PC-9 (cell line): ENCODE measurements at regions of chr3 and their contacts with region 1.

Region 1: DNA sequence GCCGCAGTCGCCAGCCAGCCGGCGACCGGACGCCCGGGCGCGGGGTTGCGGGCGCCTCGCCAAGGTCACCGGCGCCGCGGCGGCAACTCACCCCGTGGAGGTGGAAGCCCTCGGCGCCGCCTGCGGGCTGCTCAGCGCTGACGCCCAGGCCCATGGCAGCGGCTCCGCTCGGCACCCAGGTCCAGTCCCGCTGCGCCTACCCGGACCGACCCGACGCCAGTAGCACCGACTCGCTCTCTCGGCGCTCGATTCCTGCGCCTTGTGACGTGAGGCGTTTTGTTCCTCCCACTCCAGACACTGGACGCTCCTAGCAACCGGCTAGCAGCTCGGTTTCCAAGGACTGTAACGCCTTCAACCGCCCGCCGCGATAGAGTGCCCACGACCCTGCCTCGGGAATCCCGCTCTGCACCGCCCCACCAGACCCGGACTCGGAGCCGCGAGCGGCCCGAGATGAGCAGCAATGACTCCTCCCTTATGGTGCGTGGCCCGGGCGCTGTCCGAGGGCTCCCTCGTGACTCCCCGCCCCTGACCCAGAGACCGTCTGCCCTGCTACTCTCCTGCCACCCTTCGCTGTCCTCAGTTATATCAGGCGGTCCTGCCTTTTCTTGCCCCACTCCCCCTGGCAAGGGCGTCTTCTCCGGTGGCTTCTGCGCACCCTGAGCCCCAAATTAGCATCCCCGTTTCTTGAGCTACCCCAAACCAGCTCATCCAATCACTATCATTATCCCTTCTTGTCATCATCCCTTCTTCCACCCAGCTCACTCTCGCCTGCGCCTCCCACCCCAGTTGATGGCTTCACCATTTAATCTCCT is at the starts of genes GORASP1 and TTC21A:
- DNase-seq: peak; percentile 64 to 71
- H3K4me3 ChIP-seq: peak within 1 kb of the TSS; percentile 95
- H3K27ac ChIP-seq: no peak within 1 kb of the TSS
- H3K4me1 ChIP-seq: peaks cover 16% of the 10 kb centered on the region
- H3K27me3 ChIP-seq: no peaks in the 10 kb centered on the region
- CTCF ChIP-seq: no peak
- total RNA-seq, gene GORASP1: 43.4 and 44.4 TPM in 2 replicates
- total RNA-seq, gene TTC21A: 9.0 and 9.5 TPM in 2 replicates

Region 2: GRCh38 chr3:39141171-39141995 is 33.8 kb after region 1 on chr3:
- CTCF ChIA-PET with region 1: no interaction called
- POLR2A ChIA-PET with region 1: no interaction called
- intact Hi-C with region 1: loop called (anchors 2 kb)
- DNase-seq: peak; percentile 92 to 97
- H3K4me3 ChIP-seq: no peak overlapping the region; the same call in 1 of the 2 replicates
- H3K27ac ChIP-seq: peak overlapping the region; percentile 77
- H3K4me1 ChIP-seq: peaks cover 52% of the 10 kb centered on the region
- H3K27me3 ChIP-seq: no peaks in the 10 kb centered on the region
- CTCF ChIP-seq: no peak

Region 3: DNA sequence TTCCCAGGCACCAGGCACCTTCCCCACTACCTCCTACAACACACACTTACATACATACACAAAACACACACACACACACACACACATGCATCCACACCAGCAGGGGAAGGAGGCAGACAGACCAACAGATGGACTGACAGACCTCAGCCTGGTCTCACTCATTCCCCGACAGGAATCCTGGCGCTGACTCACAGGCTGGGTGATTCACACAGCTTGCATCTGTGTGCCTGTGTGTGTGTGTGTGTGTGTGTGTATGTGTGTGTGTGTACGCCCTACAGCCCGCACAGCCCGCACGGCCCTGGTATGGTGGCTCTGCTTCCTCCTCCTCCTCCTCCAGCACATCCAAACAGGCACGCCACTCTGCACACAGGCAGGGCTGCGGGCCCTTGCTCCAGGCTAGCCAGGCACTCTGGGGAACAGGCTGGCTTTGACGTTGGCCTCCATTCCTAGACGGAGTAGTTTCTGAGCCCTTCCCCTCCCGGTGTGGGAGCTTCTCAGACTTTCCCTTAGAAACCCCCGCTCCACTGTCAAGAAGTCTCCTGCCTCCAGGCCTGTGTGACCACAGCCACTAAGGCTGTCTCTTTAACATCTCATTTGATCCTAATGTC is 39.5 kb after region 1 on chr3:
- CTCF ChIA-PET with region 1: no interaction called
- POLR2A ChIA-PET with region 1: interaction called, 4 read pairs
- intact Hi-C with region 1: loop called (anchors 1 kb)
- DNase-seq: peak; percentile 85 to 88
- H3K4me3 ChIP-seq: peak overlapping the region; percentile 40; the same call in 1 of the 2 replicates
- H3K27ac ChIP-seq: peak overlapping the region; percentile 65
- H3K4me1 ChIP-seq: peaks cover 83% of the 10 kb centered on the region
- H3K27me3 ChIP-seq: no peaks in the 10 kb centered on the region
- CTCF ChIP-seq: no peak

Region 4: DNA sequence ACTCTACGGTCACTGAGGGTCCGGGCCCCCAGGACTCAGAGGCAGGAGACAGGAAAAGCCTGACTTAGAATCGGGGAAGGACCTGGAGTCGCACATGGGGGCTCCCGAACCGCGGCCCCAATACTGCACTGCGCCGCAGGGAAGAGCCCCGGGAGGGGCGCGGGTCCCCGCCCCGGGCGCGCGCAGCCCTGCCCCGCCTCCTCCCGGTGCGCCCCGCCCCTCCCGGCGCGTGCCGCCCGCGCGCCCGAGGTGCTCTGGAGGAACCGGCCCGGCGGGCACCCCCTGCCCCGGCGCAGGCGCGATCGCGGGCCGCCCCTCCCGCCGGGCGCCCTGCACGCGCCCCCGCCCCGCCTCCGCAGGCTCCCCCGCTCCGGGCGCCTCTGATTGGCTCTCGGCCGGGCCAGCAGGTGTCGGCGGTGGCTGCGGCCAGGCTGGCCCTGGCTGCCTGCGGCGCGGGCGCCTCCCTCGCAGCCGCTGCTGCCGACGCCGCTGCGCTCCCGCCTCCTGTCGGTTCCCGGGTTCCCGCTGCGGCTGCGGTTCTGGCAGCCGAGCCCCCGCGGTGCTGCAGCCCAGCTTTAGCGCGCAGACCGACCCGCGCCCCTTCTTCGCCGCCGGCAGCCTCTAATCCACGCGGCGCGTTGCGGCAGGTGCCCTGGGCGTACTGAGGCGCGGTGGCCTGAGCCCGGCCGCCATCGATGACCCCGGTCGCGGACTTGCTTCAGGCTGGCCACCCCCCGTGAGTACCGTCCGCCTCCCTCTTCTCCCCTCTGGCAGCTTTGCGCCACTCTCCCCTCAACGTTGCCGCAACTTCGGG is 701.8 kb after region 1 on chr3 and contains the start of gene MYRIP:
- CTCF ChIA-PET with region 1: no interaction called
- POLR2A ChIA-PET with region 1: no interaction called
- intact Hi-C with region 1: no loop called
- DNase-seq: peak in 1 of 2 experiments; percentile 17
- H3K4me3 ChIP-seq: no peak within 1 kb of the TSS
- H3K27ac ChIP-seq: no peak within 1 kb of the TSS
- H3K4me1 ChIP-seq: no peaks in the 10 kb centered on the region
- H3K27me3 ChIP-seq: 0 out of 2 replicates have a peak, but pooled peaks cover 3% of the 10 kb centered on the region
- CTCF ChIP-seq: no peak
- total RNA-seq, gene MYRIP: not detected in 2 replicates